GM12878 (cell line): ENCODE measurements at regions of chr14 and their contacts with region 1.

Region 1: DNA sequence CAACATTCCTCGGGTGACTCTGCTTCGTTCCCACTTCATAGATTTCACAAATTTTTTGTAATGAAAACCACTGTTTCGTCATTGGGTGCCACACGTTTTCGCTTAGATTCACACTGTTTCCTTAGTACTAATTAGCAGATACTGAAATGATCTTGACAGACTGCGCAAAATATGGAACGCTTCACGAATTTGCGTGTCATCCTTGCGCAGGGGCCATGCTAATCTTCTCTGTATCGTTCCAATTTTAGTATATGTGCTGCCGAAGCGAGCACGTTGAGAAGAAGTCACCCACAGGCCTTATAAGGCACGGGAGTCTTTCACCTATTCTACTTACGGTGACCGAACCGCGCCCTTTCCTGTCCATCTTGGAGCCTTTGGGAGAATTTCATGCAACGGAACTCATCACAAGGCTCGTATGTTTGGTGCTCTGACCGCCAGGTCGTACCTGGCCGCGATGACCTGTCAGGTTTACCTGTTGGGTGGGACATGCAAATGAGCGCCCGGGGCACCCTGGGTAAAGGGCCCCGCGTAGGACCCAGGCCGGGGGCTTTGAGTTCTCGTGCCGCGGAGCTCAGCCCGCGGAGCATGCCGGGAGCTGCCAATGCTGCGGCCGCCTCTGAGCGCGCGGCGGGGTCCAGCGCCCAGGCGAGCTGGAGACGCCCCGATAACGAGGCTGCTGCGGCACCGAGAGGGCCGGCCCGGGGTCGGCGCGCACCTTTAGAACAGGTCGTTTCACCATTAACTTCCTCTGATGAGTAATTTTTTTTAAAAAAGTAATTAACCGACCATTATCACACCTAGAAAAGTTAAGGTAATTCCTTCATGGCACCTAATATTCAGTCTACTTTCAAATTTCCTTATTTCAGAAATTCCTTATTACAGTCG is at the start of gene RNU6-8:
- DNase-seq: peak; percentile 57
- ATAC-seq: peak; percentile 76
- H3K4me3 ChIP-seq: peak within 1 kb of the TSS; percentile 73
- H3K27ac ChIP-seq: peak within 1 kb of the TSS; percentile 79
- H3K4me1 ChIP-seq: peaks cover 33% of the 10 kb centered on the region
- H3K27me3 ChIP-seq: no peaks in the 10 kb centered on the region
- CTCF ChIP-seq: no peak
- EP300 ChIP-seq: peak; percentile 6 to 38; a peak in 2 of 4 replicates
- POLR2A ChIP-seq: peak; percentile 54; the same call in 1 of the 2 replicates
- RAD21 ChIP-seq: no peak
- polyA plus RNA-seq, gene RNU6-8: not detected

Region 2: GRCh38 chr14:32102152-32102787 is 101.0 kb before region 1 on chr14:
- CTCF ChIA-PET with region 1: no interaction called
- POLR2A ChIA-PET with region 1: no interaction called
- RAD21 ChIA-PET with region 1: interaction called, 4 read pairs
- SMC1A ChIA-PET with region 1: interaction called, 3 read pairs
- in situ Hi-C with region 1: no loop called
- intact Hi-C with region 1: loop called (anchors 2 kb)
- DNase-seq: peak; percentile 37
- ATAC-seq: peak; percentile 92
- H3K4me3 ChIP-seq: no peak overlapping the region
- H3K27ac ChIP-seq: no peak overlapping the region
- H3K4me1 ChIP-seq: peaks cover 20% of the 10 kb centered on the region
- H3K27me3 ChIP-seq: no peaks in the 10 kb centered on the region
- CTCF ChIP-seq: no peak
- EP300 ChIP-seq: peak in 1 of 2 experiments; percentile 59; a peak in 2 of 4 replicates
- POLR2A ChIP-seq: no peak
- RAD21 ChIP-seq: no peak

Region 3: GRCh38 chr14:32186248-32186647 is 17.0 kb before region 1 on chr14:
- CTCF ChIA-PET with region 1: interaction called, 6 read pairs
- POLR2A ChIA-PET with region 1: interaction called, 3 read pairs
- RAD21 ChIA-PET with region 1: no interaction called
- SMC1A ChIA-PET with region 1: interaction called, 12 read pairs
- in situ Hi-C with region 1: no loop called
- intact Hi-C with region 1: no loop called
- DNase-seq: no peak
- ATAC-seq: peak; percentile 58
- H3K4me3 ChIP-seq: no peak overlapping the region
- H3K27ac ChIP-seq: no peak overlapping the region
- H3K4me1 ChIP-seq: peaks cover 5% of the 10 kb centered on the region
- H3K27me3 ChIP-seq: no peaks in the 10 kb centered on the region
- CTCF ChIP-seq: no peak
- EP300 ChIP-seq: no peak
- POLR2A ChIP-seq: no peak
- RAD21 ChIP-seq: no peak

Region 4: GRCh38 chr14:32224737-32225377 is 21.6 kb after region 1 on chr14:
- CTCF ChIA-PET with region 1: no interaction called
- POLR2A ChIA-PET with region 1: no interaction called
- RAD21 ChIA-PET with region 1: interaction called, 4 read pairs
- SMC1A ChIA-PET with region 1: interaction called, 10 read pairs
- in situ Hi-C with region 1: no loop called
- intact Hi-C with region 1: no loop called
- DNase-seq: no peak
- ATAC-seq: peak; percentile 96
- H3K4me3 ChIP-seq: no peak overlapping the region
- H3K27ac ChIP-seq: no peak overlapping the region
- H3K4me1 ChIP-seq: no peaks in the 10 kb centered on the region
- H3K27me3 ChIP-seq: no peaks in the 10 kb centered on the region; a peak in 1 of 4 replicates
- CTCF ChIP-seq: peak in 2 of 3 experiments; percentile 19 to 22; a peak in 1 of 6 replicates
- EP300 ChIP-seq: no peak
- POLR2A ChIP-seq: no peak
- RAD21 ChIP-seq: no peak

Region 5: GRCh38 chr14:32259368-32260013 is 56.3 kb after region 1 on chr14:
- CTCF ChIA-PET with region 1: interaction called, 4 read pairs
- POLR2A ChIA-PET with region 1: no interaction called
- RAD21 ChIA-PET with region 1: interaction called, 12 read pairs
- SMC1A ChIA-PET with region 1: interaction called, 13 read pairs
- in situ Hi-C with region 1: no loop called
- intact Hi-C with region 1: no loop called
- DNase-seq: peak; percentile 66
- ATAC-seq: peak; percentile 90
- H3K4me3 ChIP-seq: no peak overlapping the region
- H3K27ac ChIP-seq: peak overlapping the region; percentile 69
- H3K4me1 ChIP-seq: peaks cover 24% of the 10 kb centered on the region
- H3K27me3 ChIP-seq: no peaks in the 10 kb centered on the region
- CTCF ChIP-seq: no peak
- EP300 ChIP-seq: peak; percentile 41 to 45; a peak in 2 of 4 replicates
- POLR2A ChIP-seq: no peak
- RAD21 ChIP-seq: 0 out of 2 replicates have a peak, but pooled peaks have one; percentile 6

Region 6: GRCh38 chr14:32443890-32444661 is 240.8 kb after region 1 on chr14:
- CTCF ChIA-PET with region 1: no interaction called
- POLR2A ChIA-PET with region 1: no interaction called
- RAD21 ChIA-PET with region 1: no interaction called
- SMC1A ChIA-PET with region 1: no interaction called
- in situ Hi-C with region 1: no loop called
- intact Hi-C with region 1: no loop called
- DNase-seq: no peak
- ATAC-seq: no peak
- H3K4me3 ChIP-seq: no peak overlapping the region
- H3K27ac ChIP-seq: no peak overlapping the region
- H3K4me1 ChIP-seq: peaks cover 2% of the 10 kb centered on the region
- H3K27me3 ChIP-seq: no peaks in the 10 kb centered on the region
- CTCF ChIP-seq: no peak
- EP300 ChIP-seq: no peak
- POLR2A ChIP-seq: no peak
- RAD21 ChIP-seq: no peak